CD8-positive, alpha-beta memory T cell (primary cell): ENCODE measurements at regions of chr2 and their contacts with region 1.

Region 1: DNA sequence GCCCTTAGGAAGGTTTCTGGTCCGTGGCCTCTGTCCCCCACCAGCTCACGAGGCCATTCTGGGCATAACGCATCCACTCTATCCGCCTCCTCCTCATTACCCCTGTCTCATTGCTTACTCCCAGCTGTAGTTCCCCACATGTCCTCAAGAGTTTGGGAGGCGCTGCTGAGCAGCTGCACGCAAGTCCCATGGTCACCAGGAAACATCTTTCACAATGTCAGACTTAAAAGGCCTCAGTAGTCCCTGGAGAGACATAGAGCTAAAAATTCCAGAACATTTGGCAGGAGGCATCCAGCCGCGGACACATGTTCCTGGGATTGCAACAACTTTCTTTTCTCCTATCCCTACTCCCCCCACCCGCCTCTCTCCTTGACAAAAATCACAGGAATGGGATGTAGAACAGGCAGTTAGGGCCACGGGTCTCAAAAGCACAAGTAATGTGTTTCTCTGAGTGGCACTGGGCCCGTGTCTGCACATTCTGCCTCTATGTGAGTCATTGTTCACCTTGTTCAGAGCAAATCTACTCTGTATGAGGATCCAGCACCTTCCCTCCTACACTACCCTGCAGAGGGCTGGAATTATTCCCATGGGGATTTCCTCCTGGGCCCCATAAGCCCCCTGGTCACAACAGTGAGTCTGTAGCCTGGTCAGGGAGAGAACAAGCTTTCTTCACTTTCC is 8.1 kb downstream of the LBH start:
- DNase-seq: peak; percentile 50 to 84 (median 71)
- H3K4me3 ChIP-seq: peak overlapping the region; percentile 33
- H3K4me3 Mint-ChIP-seq: peak overlapping the region; percentile 66 to 94 (median 91)
- H3K27ac ChIP-seq: no peak overlapping the region
- H3K27ac Mint-ChIP-seq: peak overlapping the region; percentile 55 to 97 (median 90)
- H3K4me1 ChIP-seq: peaks cover 89% of the 10 kb centered on the region
- H3K4me1 Mint-ChIP-seq: peaks cover 89 to 96% (median 96%) of the 10 kb centered on the region in 3 donors
- H3K27me3 ChIP-seq: no peaks in the 10 kb centered on the region
- H3K27me3 Mint-ChIP-seq: no peaks in the 10 kb centered on the region

Region 2: GRCh38 chr2:30225131-30225762 is 14.2 kb before region 1 on chr2:
- CTCF ChIA-PET with region 1: interaction called, 23 read pairs
- POLR2A ChIA-PET with region 1: interaction called, 7 read pairs
- DNase-seq: peak; percentile 33 to 74 (median 66)
- H3K4me3 ChIP-seq: peak overlapping the region; percentile 63
- H3K4me3 Mint-ChIP-seq: peak overlapping the region; percentile 87 to 99 (median 96)
- H3K27ac ChIP-seq: peak overlapping the region; percentile 76
- H3K27ac Mint-ChIP-seq: peak overlapping the region; percentile 98 to 100 (median 100)
- H3K4me1 ChIP-seq: peaks cover 66% of the 10 kb centered on the region
- H3K4me1 Mint-ChIP-seq: peaks cover 75 to 86% (median 86%) of the 10 kb centered on the region in 3 donors
- H3K27me3 ChIP-seq: no peaks in the 10 kb centered on the region
- H3K27me3 Mint-ChIP-seq: peaks cover 0 to 1% of the 10 kb centered on the region in 2 donors

Region 3: DNA sequence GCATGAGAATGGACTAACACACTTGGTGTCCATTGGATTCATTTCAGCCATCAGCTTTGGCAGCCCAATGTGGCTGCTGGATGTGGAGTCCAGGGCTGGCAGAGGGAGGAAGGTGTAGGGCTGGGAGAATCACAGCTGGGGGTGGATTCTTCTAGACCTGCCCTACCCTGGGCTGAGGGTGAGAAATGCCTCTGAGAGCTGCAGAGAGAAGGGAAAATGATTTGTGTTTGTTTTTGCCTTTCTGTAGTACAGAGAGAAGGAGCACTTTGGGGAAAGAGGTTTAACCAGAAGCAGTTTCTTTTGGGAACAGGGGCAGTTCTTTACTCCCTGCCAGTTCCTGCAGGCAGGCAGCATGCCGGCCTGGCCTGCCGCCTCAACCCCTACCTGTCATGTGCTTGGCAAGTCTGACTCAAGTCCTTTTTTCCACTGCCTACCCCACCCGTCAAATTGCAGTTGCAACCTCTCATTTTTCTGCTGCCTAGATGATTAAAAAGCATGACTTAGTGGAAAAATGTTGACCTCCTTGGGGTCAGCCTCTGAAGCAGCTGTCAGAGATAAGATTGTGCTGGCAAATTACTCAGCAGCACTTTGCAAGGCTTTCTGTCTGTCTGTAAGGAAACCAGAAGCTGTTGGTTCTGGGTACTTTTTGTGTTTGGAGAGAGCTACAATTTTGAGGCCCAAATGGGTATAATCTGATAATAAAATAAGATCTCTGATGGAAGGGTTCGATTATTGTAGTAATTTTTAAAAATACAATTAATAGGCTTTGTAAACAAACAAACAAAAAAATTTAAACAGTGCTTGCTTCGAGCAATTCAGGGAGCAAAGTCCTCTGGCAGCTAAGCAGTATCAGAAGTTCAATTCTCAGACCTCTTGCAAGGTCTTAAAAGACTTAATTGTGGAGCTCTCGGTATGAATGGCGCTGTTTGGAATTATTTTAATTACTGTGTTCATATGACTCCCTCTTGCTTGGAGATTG is 13.6 kb after region 1 on chr2:
- CTCF ChIA-PET with region 1: interaction called, 11 read pairs
- POLR2A ChIA-PET with region 1: interaction called, 3 read pairs
- DNase-seq: peak in 1 of 5 donors; percentile 65
- H3K4me3 ChIP-seq: peak overlapping the region; percentile 33
- H3K4me3 Mint-ChIP-seq: peak overlapping the region; percentile 30 to 77 (median 68)
- H3K27ac ChIP-seq: peak overlapping the region; percentile 80
- H3K27ac Mint-ChIP-seq: peak overlapping the region; percentile 81 to 95 (median 90)
- H3K4me1 ChIP-seq: peaks cover 92% of the 10 kb centered on the region
- H3K4me1 Mint-ChIP-seq: peaks cover 91 to 99% (median 98%) of the 10 kb centered on the region in 3 donors
- H3K27me3 ChIP-seq: no peaks in the 10 kb centered on the region
- H3K27me3 Mint-ChIP-seq: no peaks in the 10 kb centered on the region

Region 4: GRCh38 chr2:30475542-30475941 is 236.1 kb after region 1 on chr2:
- CTCF ChIA-PET with region 1: interaction called, 10 read pairs
- POLR2A ChIA-PET with region 1: no interaction called
- DNase-seq: no peak
- H3K4me3 ChIP-seq: no peak overlapping the region
- H3K4me3 Mint-ChIP-seq: no peak overlapping the region
- H3K27ac ChIP-seq: no peak overlapping the region
- H3K27ac Mint-ChIP-seq: peak overlapping the region in 1 of 8 donors; percentile 5
- H3K4me1 ChIP-seq: no peaks in the 10 kb centered on the region
- H3K4me1 Mint-ChIP-seq: peaks cover 13 to 17% (median 16%) of the 10 kb centered on the region in 3 donors
- H3K27me3 ChIP-seq: no peaks in the 10 kb centered on the region
- H3K27me3 Mint-ChIP-seq: no peaks in the 10 kb centered on the region